Mucosa of descending colon (tissue), 3 donors: ENCODE measurements at regions of chr4 and their contacts with region 1.

Region 1: DNA sequence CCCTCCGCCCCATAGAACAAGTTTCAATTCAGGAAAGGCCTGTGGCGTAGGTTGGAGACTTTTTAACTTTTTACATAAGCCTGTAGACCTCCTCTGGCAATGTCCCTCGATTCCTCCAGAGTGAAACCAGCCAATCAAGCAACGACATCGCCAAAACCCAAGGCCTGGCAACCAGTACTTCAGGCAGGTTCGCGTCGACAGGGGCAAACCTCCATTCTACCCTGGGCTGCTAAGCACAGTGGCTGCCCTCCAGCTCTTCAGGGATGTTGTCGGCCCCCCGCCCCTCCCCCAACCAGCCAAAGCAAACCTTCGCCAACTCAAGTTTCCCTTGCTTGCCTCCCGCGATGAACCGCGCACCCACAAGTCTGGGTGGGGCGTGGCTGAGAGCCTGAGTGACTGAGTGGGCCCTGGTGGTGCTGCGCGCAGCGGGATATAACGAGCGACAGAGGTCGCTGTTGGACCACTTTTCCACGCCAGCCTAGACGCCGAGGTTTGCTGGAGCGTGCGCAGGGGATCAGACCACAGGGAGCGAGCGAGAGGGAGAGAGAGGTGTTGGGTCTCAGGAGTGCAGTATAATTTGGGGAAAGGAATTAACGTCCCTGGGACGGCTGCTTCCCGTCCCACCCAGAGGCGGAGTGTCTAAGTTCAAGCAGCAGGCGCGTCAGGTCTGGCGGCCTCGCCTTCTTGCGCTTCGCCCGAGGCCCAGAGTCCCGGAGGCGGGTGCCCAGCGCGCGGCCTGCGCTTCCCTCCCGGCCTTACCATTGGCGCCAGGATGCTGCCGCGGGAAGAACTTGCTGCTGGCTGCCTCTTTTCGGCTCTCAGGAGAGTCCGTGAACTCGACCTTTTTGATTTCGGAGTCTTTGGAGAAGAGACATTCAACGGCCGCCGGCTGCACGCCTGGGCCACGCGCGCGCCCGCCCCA is 9.0 kb upstream of the PITX2 start:
- DNase-seq: peak; percentile 70 to 82 (median 80)
- ATAC-seq: peak; percentile 96
- H3K4me3 ChIP-seq: no peak overlapping the region
- H3K4me1 ChIP-seq: peaks cover 30% of the 10 kb centered on the region
- CTCF ChIP-seq: peak; percentile 31

Region 2: GRCh38 chr4:110516106-110516922 is 115.5 kb before region 1 on chr4:
- intact Hi-C with region 1: no loop called
- DNase-seq: peak; percentile 58 to 90 (median 77)
- ATAC-seq: peak; percentile 100
- H3K4me3 ChIP-seq: no peak overlapping the region
- H3K4me1 ChIP-seq: peaks cover 2% of the 10 kb centered on the region
- CTCF ChIP-seq: peak; percentile 22

Region 3: GRCh38 chr4:110959041-110959643 is 327.3 kb after region 1 on chr4:
- intact Hi-C with region 1: loop called in 1 of 2 experiments (anchors 5 kb)
- DNase-seq: no peak
- ATAC-seq: no peak
- H3K4me3 ChIP-seq: no peak overlapping the region
- H3K4me1 ChIP-seq: no peaks in the 10 kb centered on the region
- CTCF ChIP-seq: no peak

Region 4: DNA sequence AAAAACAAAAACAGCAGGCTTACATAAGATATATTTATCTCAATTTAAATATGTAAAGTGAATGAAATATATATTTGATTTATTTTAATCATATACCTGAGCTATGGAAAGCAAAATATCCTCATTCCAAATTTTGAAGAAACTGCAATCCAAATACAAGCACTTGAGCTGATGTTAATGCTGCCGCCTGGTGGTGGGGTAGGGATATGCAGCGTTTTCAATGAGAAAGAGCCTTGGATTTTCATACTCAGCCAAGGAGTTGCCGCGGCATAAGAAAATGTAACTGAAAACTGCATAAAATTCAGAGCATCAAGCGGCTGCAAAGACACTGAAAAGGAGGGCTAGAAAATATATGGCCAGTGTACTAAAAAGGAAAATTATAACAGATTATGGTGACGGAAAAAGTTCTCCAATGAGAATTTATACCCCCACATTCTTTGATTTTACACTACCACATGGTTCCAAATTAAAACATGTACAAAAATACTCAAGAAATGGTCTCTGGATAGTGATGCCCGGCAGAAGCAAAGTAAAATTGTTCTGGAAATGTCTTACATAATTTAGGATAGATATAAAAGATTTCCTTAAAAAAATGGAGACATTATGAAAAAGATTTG is 651.3 kb after region 1 on chr4:
- intact Hi-C with region 1: loop called in 1 of 2 experiments (anchors 5 kb)
- DNase-seq: peak; percentile 29 to 79 (median 66)
- ATAC-seq: peak; percentile 67
- H3K4me3 ChIP-seq: no peak overlapping the region
- H3K4me1 ChIP-seq: no peaks in the 10 kb centered on the region
- CTCF ChIP-seq: peak; percentile 59